Heart right ventricle (tissue), 16 donors: ENCODE measurements at regions of chr3 and their contacts with region 1.

Region 1: DNA sequence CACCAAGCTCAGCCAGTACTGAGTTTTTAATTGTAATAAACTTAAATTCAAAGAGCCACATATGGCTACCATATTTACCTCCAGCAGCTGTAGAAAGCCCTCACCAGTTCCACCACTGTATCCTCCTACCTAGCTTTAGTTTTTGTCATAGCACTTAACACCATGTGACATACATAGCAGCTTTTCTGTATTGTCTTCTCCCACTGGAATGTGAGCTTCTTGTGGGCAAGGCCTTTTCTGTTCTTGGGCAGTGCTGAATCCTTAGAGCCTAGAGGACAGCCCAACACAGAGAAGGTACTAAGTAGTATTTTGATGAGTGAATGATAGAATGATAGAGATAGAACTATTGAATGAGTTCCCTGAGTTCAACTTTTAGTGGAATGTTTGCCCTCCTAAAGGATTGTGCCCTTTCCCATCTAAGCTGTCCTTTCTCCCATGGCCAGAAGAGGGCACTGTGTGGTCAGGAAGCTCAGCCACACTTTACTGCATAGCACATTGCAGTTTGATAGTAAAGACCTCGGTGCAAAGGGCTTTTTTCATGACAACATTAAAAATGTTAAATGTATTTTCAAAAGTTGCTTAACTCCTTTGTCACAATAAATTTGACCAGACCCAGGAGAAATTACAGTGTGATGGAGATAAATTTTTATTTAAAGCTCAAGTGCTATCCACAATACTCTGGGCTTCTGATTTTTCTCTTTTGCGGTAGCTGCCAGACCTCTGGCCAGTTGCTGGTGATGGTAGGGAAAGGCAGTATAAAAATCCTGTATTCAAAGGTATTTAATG is 115.8 kb downstream of the GHSR start:
- DNase-seq: peak in 1 of 2 donors; percentile 75
- ATAC-seq: peak; percentile 80 to 91 (median 88)
- H3K4me3 ChIP-seq: no peak overlapping the region
- H3K27ac ChIP-seq: peak overlapping the region in 6 of 10 donors; percentile 22 to 62 (median 40)
- H3K4me1 ChIP-seq: peaks cover 0 to 17% (median 6%) of the 10 kb centered on the region in 9 donors
- H3K27me3 ChIP-seq: no peaks in the 10 kb centered on the region
- CTCF ChIP-seq: peak; percentile 69 to 95 (median 91)

Region 2: DNA sequence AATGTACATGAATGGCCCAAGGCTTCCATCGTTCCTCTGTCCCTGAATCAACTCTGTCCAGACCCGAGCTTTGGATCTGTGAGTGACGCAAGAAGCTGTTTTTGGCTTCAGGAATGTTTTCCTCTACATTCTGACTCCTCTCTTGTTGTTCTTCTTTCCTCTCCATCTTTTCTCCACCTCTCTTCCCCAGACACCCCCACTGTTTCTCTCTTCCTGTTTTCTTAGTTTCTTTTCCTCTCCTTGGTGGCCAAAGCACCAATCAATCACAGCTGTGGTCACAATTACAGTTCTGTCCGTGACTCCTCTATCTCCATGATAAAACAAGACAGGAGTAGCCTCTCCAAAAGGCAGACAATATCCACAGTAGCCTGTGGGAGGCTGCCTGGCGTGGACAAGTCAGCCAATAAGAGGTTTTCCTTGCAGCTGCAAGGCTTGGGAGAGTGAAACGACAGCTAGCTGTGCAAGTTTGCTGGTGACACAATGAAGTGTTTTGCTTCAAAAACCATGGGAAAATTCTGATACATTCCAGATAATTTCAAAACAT is 494.2 kb before region 1 on chr3:
- intact Hi-C with region 1: loop called in 2 of 10 experiments (anchors 5 to 10 kb)
- DNase-seq: peak; percentile 39 to 72
- ATAC-seq: peak; percentile 75 to 85 (median 78)
- H3K4me3 ChIP-seq: peak overlapping the region in 7 of 10 donors; percentile 6 to 36 (median 23)
- H3K27ac ChIP-seq: peak overlapping the region; percentile 53 to 84 (median 78)
- H3K4me1 ChIP-seq: peaks cover 3 to 84% (median 64%) of the 10 kb centered on the region in 9 donors
- H3K27me3 ChIP-seq: no peaks in the 10 kb centered on the region
- CTCF ChIP-seq: peak in 1 of 9 donors; percentile 27

Region 3: DNA sequence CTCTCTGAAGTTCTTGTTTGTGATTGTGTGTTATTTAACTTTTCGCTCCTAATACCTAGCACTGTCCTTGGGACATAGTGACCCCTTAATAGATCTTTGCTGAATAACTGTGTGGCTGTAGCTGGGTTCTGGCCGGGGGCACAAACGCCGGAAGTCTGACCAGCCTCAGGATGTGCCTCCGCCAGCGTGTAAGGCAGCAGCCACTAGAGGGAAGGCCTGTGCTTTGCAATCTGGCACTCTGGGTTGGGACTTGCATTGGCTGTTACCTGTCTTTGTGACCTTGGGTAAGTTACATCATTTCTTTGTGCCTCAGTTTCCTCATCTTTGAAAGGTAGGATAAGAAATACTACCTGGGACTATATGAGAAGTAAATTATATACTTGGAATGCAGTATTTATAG is 42.9 kb before region 1 on chr3:
- intact Hi-C with region 1: loop called in 3 of 10 experiments (anchors 5 to 10 kb)
- DNase-seq: peak; percentile 39 to 51
- ATAC-seq: peak in 7 of 8 donors; percentile 38 to 75 (median 55)
- H3K4me3 ChIP-seq: peak overlapping the region in 2 of 10 donors; percentile 15 to 17
- H3K27ac ChIP-seq: peak overlapping the region; percentile 40 to 84 (median 68)
- H3K4me1 ChIP-seq: peaks cover 14 to 84% (median 60%) of the 10 kb centered on the region in 9 donors
- H3K27me3 ChIP-seq: no peaks in the 10 kb centered on the region
- CTCF ChIP-seq: peak; percentile 25 to 70 (median 57)

Region 4: GRCh38 chr3:172666873-172667694 is 334.6 kb after region 1 on chr3:
- intact Hi-C with region 1: loop called in 1 of 10 experiments (anchors 5 kb)
- DNase-seq: peak in 1 of 2 donors; percentile 86
- ATAC-seq: peak; percentile 94 to 99 (median 96)
- H3K4me3 ChIP-seq: no peak overlapping the region
- H3K27ac ChIP-seq: no peak overlapping the region
- H3K4me1 ChIP-seq: peaks cover 3 to 38% (median 17%) of the 10 kb centered on the region in 9 donors
- H3K27me3 ChIP-seq: no peaks in the 10 kb centered on the region
- CTCF ChIP-seq: peak; percentile 73 to 87 (median 82)

Region 5: GRCh38 chr3:172752651-172753050 is 420.2 kb after region 1 on chr3:
- intact Hi-C with region 1: no loop called
- DNase-seq: no peak
- ATAC-seq: no peak
- H3K4me3 ChIP-seq: no peak overlapping the region
- H3K27ac ChIP-seq: no peak overlapping the region
- H3K4me1 ChIP-seq: peaks cover 0 to 31% (median 19%) of the 10 kb centered on the region in 9 donors
- H3K27me3 ChIP-seq: no peaks in the 10 kb centered on the region
- CTCF ChIP-seq: no peak